ENCODE measurements at regions of chr6 and their contacts with region 1.

Region 1: DNA sequence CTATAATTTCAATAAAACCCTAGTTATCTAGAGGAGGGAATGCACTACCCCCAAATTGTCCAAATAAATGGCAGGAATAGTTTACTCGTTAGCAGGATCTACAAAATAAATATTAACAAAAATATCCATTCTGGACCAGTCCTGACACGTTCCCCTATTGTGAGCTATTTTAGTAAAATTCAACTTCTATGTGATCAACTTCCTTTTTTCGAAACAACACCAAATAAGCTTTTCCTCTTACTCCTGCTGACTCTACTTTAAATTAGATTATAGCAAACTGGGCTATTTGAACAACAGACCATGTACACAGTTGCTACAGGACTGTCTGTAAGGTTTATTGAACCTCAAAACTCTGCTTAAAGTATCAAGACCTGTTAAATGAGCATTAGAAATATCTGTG is 154.3 kb downstream of the IPCEF1 start:
- DNase-seq: no peak
- ATAC-seq: no peak
- H3K4me3 ChIP-seq: no peak overlapping the region
- H3K4me3 Mint-ChIP-seq: no peak overlapping the region
- H3K27ac ChIP-seq: no peak overlapping the region
- H3K27ac Mint-ChIP-seq: peak overlapping the region; percentile 16
- H3K4me1 ChIP-seq: peaks cover 5% of the 10 kb centered on the region
- H3K4me1 Mint-ChIP-seq: peaks cover 74% of the 10 kb centered on the region
- H3K27me3 ChIP-seq: no peaks in the 10 kb centered on the region
- H3K27me3 Mint-ChIP-seq: no peaks in the 10 kb centered on the region
- CTCF ChIP-seq: no peak

Region 2: DNA sequence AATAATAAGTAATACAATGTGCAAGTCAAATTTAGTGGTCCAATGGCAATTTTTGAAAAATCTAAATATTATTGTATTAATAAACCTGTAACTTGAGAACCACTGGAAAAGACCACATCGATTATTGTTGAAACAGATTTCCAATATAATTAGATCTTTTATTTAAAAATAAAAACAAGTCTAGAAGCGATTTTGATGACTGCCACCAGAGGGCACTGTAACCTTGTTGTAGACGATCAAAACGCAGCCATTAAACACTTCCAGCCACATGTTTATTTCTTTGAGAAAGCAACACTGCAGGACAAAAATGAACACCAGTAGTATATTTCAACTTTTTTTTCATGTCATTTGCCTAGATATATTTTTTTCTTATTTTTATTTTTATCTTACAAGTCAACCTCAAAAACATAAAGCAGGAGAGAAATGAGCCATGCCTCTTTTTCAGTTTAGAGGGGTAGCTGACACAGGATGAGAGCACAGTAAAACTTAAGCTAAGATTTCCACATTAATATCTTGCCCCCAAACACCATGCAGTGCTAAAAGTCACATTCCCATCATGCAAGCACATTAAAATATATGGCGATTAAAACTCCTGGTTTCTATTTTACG is 47.9 kb before region 1 on chr6:
- CTCF ChIA-PET with region 1: no interaction called
- POLR2A ChIA-PET with region 1: no interaction called
- intact Hi-C with region 1: no loop called
- DNase-seq: peak; percentile 40 to 89 (median 56)
- ATAC-seq: no peak
- H3K4me3 ChIP-seq: no peak overlapping the region
- H3K4me3 Mint-ChIP-seq: no peak overlapping the region
- H3K27ac ChIP-seq: peak overlapping the region in 1 of 2 donors; percentile 9
- H3K27ac Mint-ChIP-seq: peak overlapping the region; percentile 93
- H3K4me1 ChIP-seq: peaks cover 33% of the 10 kb centered on the region
- H3K4me1 Mint-ChIP-seq: peaks cover 55% of the 10 kb centered on the region
- H3K27me3 ChIP-seq: no peaks in the 10 kb centered on the region
- H3K27me3 Mint-ChIP-seq: no peaks in the 10 kb centered on the region
- CTCF ChIP-seq: peak; percentile 92

Region 3: DNA sequence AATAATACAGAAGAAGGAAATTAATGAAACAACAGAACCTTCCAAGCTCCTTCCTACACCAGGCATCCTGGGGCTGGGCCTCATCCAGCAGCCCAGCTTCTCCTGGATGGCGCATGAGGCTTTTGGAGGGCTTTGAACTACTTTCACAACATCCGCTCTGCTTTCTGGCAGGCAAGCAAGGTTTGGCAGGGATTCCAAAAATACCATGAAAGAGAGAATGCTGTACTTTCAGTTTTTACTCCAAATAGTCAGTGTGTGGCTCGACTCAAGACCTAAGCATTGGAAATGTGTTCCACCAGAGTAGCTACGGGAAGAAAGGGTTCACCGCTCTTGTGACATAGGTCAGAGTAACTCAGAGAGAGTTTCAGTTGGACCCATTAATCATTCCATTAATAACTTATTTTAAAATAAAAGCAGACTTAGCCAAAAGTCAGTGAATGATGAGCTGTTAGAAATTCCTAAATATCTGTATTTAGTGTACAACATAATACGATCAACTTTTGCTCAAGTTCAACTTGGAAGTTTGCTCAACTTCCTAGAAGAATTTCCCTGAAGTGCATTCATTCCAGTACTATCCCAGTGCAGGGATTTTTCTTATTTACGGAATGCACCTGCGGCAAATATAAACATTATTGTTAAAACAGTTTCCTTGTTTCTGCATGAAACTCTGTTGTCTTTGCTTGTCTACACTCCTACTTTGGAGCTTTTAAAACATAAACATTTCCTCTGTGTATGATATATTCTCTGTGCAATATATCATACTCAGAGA is 37.8 kb before region 1 on chr6:
- CTCF ChIA-PET with region 1: no interaction called
- POLR2A ChIA-PET with region 1: no interaction called
- intact Hi-C with region 1: loop called in 1 of 2 experiments (anchors 5 kb)
- DNase-seq: peak in 2 of 14 experiments; percentile 29 to 31
- ATAC-seq: peak; percentile 67
- H3K4me3 ChIP-seq: no peak overlapping the region
- H3K4me3 Mint-ChIP-seq: peak overlapping the region; percentile 27
- H3K27ac ChIP-seq: peak overlapping the region in 1 of 2 donors; percentile 26
- H3K27ac Mint-ChIP-seq: no peak overlapping the region
- H3K4me1 ChIP-seq: peaks cover 25% of the 10 kb centered on the region
- H3K4me1 Mint-ChIP-seq: peaks cover 60% of the 10 kb centered on the region
- H3K27me3 ChIP-seq: no peaks in the 10 kb centered on the region
- H3K27me3 Mint-ChIP-seq: no peaks in the 10 kb centered on the region
- CTCF ChIP-seq: no peak